Activated CD4-positive, alpha-beta T cell treated with anti-CD3 and anti-CD28 coated beads, Interleukin-2, amount 10 ng/mL, durations not matched to agents 24 days and 14 days (primary cell): ENCODE measurements at regions of chr7 and their contacts with region 1.

Region 1: DNA sequence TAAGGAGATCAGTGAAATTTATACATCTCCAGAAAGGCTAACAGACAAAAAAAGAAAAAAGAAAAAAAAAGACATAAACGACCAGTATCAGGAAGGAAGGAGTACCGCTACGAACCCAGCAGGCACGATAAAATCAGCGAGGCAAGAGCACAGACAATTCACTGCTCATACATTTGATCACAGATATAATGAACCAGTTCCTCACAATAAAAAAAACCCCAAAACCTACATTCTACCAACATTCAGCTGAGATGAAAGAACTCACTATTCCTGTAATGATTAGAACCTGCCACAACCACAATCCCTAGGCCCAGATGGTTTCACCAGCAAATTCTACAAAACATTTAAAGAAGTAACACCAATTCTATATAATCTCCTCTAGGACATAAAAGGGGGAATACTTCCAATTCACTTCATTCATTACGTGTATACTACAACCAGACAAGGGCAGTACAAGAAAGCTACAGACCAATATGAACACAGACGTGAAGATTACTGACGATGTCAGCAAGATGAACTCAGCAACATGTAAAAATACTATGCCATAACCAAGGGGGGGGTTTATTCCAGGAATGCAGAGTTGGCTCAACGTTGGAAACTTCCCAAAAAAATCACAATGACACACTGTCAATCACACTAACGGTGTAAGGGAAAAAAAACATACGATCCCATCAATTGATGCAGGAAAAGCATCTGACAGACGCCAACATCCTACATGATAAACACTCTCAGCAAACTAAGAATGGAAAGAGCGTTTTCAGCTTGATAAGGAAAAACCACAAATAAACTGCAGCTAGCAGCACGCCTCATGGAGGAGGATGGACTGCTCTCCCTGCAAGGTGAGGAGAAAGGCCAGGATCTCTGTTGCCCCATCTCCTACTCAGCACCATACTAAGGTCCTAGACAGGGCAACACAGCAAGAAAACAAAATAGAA is 256.2 kb downstream of the ELFN1 start:
- DNase-seq: peak; percentile 79
- H3K4me3 Mint-ChIP-seq: peak overlapping the region; percentile 67
- H3K27ac Mint-ChIP-seq: peak overlapping the region; percentile 18
- H3K4me1 Mint-ChIP-seq: peaks cover 55% of the 10 kb centered on the region
- H3K27me3 Mint-ChIP-seq: peaks cover 21% of the 10 kb centered on the region

Region 2: DNA sequence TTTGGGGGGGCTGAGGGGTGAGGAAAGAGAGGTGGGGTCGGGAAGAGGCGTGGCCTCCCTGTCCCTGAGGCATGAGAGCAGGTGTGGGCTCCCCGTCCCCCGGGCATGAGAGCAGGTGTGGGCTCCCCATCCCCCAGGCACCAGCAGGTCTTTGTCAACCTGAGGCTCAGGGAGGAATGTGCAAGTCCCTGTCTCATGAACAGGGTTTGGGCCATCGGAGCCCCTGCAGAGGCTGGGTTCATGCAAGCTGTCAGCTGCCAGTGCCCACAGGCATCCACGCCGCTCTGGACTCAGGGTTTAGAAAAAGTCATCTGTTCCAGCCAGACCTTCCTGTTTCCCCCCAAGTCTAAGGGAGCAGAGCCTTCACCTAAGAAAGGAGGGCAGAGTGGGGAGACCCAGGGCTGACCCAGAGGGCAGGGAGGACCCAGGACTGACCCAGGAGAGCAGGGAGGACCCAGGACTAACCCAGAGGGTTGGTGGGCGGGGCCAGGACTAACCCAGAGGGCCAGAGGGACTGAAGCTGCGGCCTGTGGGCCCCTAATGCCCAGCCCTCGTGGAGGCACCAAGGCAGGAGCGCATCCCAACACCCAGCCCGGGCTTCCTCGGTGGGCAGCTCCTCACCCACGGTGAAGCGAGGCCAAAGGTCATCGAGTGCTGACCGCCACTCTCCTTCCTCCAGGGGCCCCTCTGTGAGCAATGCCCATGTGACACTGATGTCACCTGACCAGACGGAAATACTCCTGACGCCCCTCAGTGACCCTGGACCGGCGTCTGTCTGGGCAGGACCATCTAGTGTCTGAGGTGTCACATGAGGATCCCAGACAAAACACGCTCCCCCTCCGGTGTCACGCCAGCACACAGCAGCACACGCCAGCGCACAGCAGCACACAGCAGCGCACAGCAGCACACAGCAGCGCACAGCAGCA is 910.8 kb before region 1 on chr7:
- intact Hi-C with region 1: no loop called
- DNase-seq: no peak
- H3K4me3 Mint-ChIP-seq: no peak overlapping the region
- H3K27ac Mint-ChIP-seq: no peak overlapping the region
- H3K4me1 Mint-ChIP-seq: peaks cover 12% of the 10 kb centered on the region
- H3K27me3 Mint-ChIP-seq: no peaks in the 10 kb centered on the region

Region 3: GRCh38 chr7:1664711-1665548 is 261.3 kb before region 1 on chr7:
- intact Hi-C with region 1: loop called (anchors 2 kb)
- DNase-seq: peak; percentile 85
- H3K4me3 Mint-ChIP-seq: no peak overlapping the region
- H3K27ac Mint-ChIP-seq: no peak overlapping the region
- H3K4me1 Mint-ChIP-seq: peaks cover 8% of the 10 kb centered on the region
- H3K27me3 Mint-ChIP-seq: peaks cover 44% of the 10 kb centered on the region

Region 4: DNA sequence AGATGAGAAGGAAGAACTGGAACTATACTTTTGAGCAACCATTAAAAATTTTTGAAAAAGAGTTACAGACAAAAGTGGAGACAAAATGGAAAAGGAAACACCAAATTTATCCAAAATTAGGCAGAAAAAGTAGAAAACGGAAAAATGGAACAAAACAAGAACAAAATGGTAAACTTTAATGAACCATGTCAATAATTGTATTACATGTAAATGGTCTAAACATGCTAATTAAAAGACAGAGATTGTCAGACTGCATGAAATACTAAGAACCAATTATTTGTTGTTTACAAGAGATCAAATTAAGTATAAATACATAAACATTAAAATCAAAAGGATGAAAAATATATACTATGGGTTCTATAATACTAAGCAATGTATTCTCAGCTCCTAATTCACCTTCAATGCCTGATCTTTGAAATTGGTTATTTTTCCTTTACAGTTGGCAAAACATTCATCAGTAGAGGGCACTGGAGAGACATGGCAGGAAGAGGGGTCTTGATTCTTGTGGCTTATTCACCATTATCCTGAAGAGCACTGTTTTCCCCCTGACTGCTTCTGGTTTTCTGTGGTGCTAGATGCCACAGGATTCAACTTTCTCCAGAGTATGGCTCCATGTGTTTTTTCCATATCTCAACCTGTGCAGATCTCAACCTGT is 131.2 kb before region 1 on chr7:
- intact Hi-C with region 1: no loop called
- DNase-seq: no peak
- H3K4me3 Mint-ChIP-seq: no peak overlapping the region
- H3K27ac Mint-ChIP-seq: no peak overlapping the region
- H3K4me1 Mint-ChIP-seq: no peaks in the 10 kb centered on the region
- H3K27me3 Mint-ChIP-seq: peaks cover 14% of the 10 kb centered on the region

Region 5: GRCh38 chr7:1961701-1962276 is 35.5 kb after region 1 on chr7:
- intact Hi-C with region 1: loop called (anchors 1 kb)
- DNase-seq: peak; percentile 79
- H3K4me3 Mint-ChIP-seq: peak overlapping the region; percentile 21
- H3K27ac Mint-ChIP-seq: peak overlapping the region; percentile 84
- H3K4me1 Mint-ChIP-seq: peaks cover 9% of the 10 kb centered on the region
- H3K27me3 Mint-ChIP-seq: peaks cover 6% of the 10 kb centered on the region

Region 6: GRCh38 chr7:2049782-2050510 is 123.7 kb after region 1 on chr7:
- intact Hi-C with region 1: no loop called
- DNase-seq: no peak
- H3K4me3 Mint-ChIP-seq: no peak overlapping the region
- H3K27ac Mint-ChIP-seq: no peak overlapping the region
- H3K4me1 Mint-ChIP-seq: peaks cover 6% of the 10 kb centered on the region
- H3K27me3 Mint-ChIP-seq: no peaks in the 10 kb centered on the region